Naive thymus-derived CD4-positive, alpha-beta T cell (primary cell): ENCODE measurements at regions of chr17 and their contacts with region 1.

Region 1: GRCh38 chr17:81101614-81102306 is 63.5 kb upstream of the PVALEF start:
- DNase-seq: peak; percentile 81 to 93 (median 90)
- ATAC-seq: peak; percentile 100
- H3K4me3 ChIP-seq: no peak overlapping the region
- H3K4me3 Mint-ChIP-seq: no peak overlapping the region
- H3K27ac ChIP-seq: no peak overlapping the region
- H3K27ac Mint-ChIP-seq: no peak overlapping the region
- H3K4me1 ChIP-seq: peaks cover 10 to 20% of the 10 kb centered on the region in 2 donors
- H3K4me1 Mint-ChIP-seq: peaks cover 0 to 3% (median under 1%) of the 10 kb centered on the region in 7 donors
- H3K27me3 ChIP-seq: no peaks in the 10 kb centered on the region
- H3K27me3 Mint-ChIP-seq: no peaks in the 10 kb centered on the region

Region 2: GRCh38 chr17:80991645-80992076 is 110.1 kb before region 1 on chr17 and contains the start of gene CHMP6:
- CTCF ChIA-PET with region 1: interaction called, 11 read pairs
- POLR2A ChIA-PET with region 1: no interaction called
- intact Hi-C with region 1: loop called in 1 of 2 experiments (anchors 1 kb)
- DNase-seq: peak; percentile 60 to 84 (median 78)
- ATAC-seq: peak; percentile 89
- H3K4me3 ChIP-seq: peak within 1 kb of the TSS; percentile 94
- H3K4me3 Mint-ChIP-seq: peak within 1 kb of the TSS; percentile 71 to 88 (median 83)
- H3K27ac ChIP-seq: peak within 1 kb of the TSS; percentile 96
- H3K27ac Mint-ChIP-seq: peak within 1 kb of the TSS; percentile 78 to 90 (median 84)
- H3K4me1 ChIP-seq: peaks cover 14 to 25% of the 10 kb centered on the region in 2 donors
- H3K4me1 Mint-ChIP-seq: peaks cover 7 to 38% (median 21%) of the 10 kb centered on the region in 7 donors
- H3K27me3 ChIP-seq: no peaks in the 10 kb centered on the region
- H3K27me3 Mint-ChIP-seq: peaks cover 0 to 11% (median 0%) of the 10 kb centered on the region in 5 donors
- total RNA-seq, gene CHMP6: 26.4 to 49.9 (median 41.7) TPM

Region 3: GRCh38 chr17:81018044-81018802 is 83.5 kb before region 1 on chr17:
- CTCF ChIA-PET with region 1: interaction called, 16 read pairs
- POLR2A ChIA-PET with region 1: no interaction called
- intact Hi-C with region 1: loop called in 1 of 2 experiments (anchors 1 kb)
- DNase-seq: peak in 7 of 9 donors; percentile 47 to 62 (median 55)
- ATAC-seq: peak; percentile 84
- H3K4me3 ChIP-seq: peak overlapping the region; percentile 74
- H3K4me3 Mint-ChIP-seq: peak overlapping the region; percentile 80 to 91 (median 88)
- H3K27ac ChIP-seq: peak overlapping the region; percentile 80
- H3K27ac Mint-ChIP-seq: peak overlapping the region; percentile 92 to 99 (median 95)
- H3K4me1 ChIP-seq: peaks cover 10 to 16% of the 10 kb centered on the region in 2 donors
- H3K4me1 Mint-ChIP-seq: peaks cover 20 to 49% (median 42%) of the 10 kb centered on the region in 7 donors
- H3K27me3 ChIP-seq: no peaks in the 10 kb centered on the region
- H3K27me3 Mint-ChIP-seq: no peaks in the 10 kb centered on the region

Region 4: GRCh38 chr17:81034779-81035388 is 66.9 kb before region 1 on chr17 and contains the start of gene BAIAP2:
- CTCF ChIA-PET with region 1: no interaction called
- POLR2A ChIA-PET with region 1: no interaction called
- intact Hi-C with region 1: loop called in 1 of 2 experiments (anchors 1 kb)
- DNase-seq: peak; percentile 88 to 95 (median 94)
- ATAC-seq: peak; percentile 94
- H3K4me3 ChIP-seq: peak within 1 kb of the TSS; percentile 53
- H3K4me3 Mint-ChIP-seq: peak within 1 kb of the TSS; percentile 87 to 96 (median 92)
- H3K27ac ChIP-seq: peak within 1 kb of the TSS; percentile 67
- H3K27ac Mint-ChIP-seq: peak within 1 kb of the TSS in 8 of 9 donors; percentile 49 to 93 (median 87)
- H3K4me1 ChIP-seq: peaks cover 0 to 9% of the 10 kb centered on the region in 2 donors
- H3K4me1 Mint-ChIP-seq: peaks cover 5 to 27% (median 19%) of the 10 kb centered on the region in 7 donors
- H3K27me3 ChIP-seq: no peaks in the 10 kb centered on the region
- H3K27me3 Mint-ChIP-seq: peaks cover 0 to 50% (median 0%) of the 10 kb centered on the region in 5 donors
- total RNA-seq, gene BAIAP2: 7.3 to 13.7 (median 12.3) TPM

Region 5: DNA sequence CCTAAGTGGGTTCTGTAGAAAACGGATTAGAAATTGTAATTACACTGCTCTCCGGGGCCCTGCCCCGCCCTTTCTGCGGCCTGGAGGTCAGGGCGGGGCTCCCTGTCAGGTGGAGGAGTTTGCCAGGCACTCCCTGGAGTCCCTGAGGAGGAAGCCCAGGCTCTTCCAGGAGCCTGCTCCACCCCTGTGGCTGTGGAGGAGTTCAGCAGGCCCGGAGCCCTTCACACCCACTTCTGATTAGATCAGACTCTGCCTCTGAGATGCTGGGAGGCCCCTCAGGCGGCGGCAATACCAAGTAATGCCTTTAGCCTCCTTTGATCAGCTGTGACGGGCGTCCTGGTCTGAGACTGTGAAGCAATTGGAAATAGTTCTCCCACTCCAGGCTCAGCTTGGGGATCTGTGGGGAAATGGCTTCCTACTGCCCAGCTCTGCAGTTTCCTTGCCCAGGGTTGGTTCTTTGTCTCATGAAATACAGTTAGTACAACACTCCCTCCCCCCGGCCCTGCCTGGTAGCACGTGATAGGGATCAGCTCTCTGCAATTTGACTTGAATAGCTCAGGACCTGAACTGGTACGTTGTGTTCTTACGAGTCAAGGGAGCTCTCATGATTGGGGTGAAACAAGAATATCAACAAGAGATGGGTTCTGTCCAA is 44.6 kb before region 1 on chr17:
- CTCF ChIA-PET with region 1: no interaction called
- POLR2A ChIA-PET with region 1: no interaction called
- intact Hi-C with region 1: no loop called
- DNase-seq: no peak
- ATAC-seq: no peak
- H3K4me3 ChIP-seq: no peak overlapping the region
- H3K4me3 Mint-ChIP-seq: no peak overlapping the region
- H3K27ac ChIP-seq: no peak overlapping the region
- H3K27ac Mint-ChIP-seq: peak overlapping the region in 2 of 9 donors; percentile 7 to 37
- H3K4me1 ChIP-seq: no peaks in the 10 kb centered on the region
- H3K4me1 Mint-ChIP-seq: peaks cover 0 to 5% (median 2%) of the 10 kb centered on the region in 7 donors
- H3K27me3 ChIP-seq: no peaks in the 10 kb centered on the region
- H3K27me3 Mint-ChIP-seq: no peaks in the 10 kb centered on the region

Region 6: DNA sequence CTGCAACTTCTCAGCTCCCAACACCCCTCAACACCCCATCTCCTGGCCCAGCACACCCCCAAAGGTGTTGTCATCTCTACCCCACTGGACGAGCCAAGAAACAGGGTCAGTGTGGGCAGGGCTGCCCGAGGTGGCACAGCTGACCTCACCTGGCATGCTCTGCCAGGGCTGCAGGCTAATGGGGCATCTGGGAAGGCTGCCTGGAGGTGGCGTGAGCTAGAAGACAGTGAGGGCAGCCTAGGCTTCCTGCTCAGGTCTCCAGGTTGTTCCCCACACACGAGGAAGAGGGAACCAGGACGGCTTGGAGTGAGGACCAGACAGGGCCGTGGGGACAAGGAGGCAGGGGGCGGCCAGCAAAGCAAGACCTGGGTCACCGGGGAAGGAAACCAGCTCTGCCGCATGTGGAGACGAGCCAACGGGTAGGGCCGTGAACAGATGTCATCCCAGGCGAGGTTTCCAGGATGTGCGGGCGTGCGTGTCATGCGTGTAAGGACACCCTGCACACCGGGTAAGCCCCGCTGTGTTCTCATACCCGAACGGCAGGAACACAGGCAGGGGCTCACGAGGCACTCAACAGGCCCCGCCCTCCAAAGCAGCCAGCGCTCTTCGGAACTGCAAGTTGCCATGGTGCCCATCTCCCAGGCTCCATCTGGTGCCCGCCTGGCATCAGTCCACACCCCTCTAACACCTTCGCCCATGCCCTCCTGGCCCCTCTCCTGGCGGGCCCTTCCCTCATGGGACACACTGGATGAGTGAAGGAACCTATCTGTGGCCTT is 33.9 kb after region 1 on chr17:
- CTCF ChIA-PET with region 1: no interaction called
- POLR2A ChIA-PET with region 1: no interaction called
- intact Hi-C with region 1: no loop called
- DNase-seq: no peak
- ATAC-seq: no peak
- H3K4me3 ChIP-seq: no peak overlapping the region
- H3K4me3 Mint-ChIP-seq: peak overlapping the region in 1 of 10 donors; percentile 8
- H3K27ac ChIP-seq: no peak overlapping the region
- H3K27ac Mint-ChIP-seq: no peak overlapping the region
- H3K4me1 ChIP-seq: no peaks in the 10 kb centered on the region
- H3K4me1 Mint-ChIP-seq: no peaks in the 10 kb centered on the region
- H3K27me3 ChIP-seq: no peaks in the 10 kb centered on the region
- H3K27me3 Mint-ChIP-seq: no peaks in the 10 kb centered on the region

Region 7: GRCh38 chr17:81238817-81239600 is 137.2 kb after region 1 on chr17 and contains the starts of genes NDUFAF8 and TEPSIN:
- CTCF ChIA-PET with region 1: no interaction called
- POLR2A ChIA-PET with region 1: no interaction called
- intact Hi-C with region 1: loop called in 1 of 2 experiments (anchors 1 kb)
- DNase-seq: peak; percentile 87 to 98 (median 97)
- ATAC-seq: peak; percentile 98
- H3K4me3 ChIP-seq: peak within 1 kb of the TSS; percentile 71
- H3K4me3 Mint-ChIP-seq: peak within 1 kb of the TSS; percentile 92 to 97 (median 95)
- H3K27ac ChIP-seq: peak within 1 kb of the TSS; percentile 79
- H3K27ac Mint-ChIP-seq: peak within 1 kb of the TSS; percentile 86 to 95 (median 90)
- H3K4me1 ChIP-seq: peaks cover 22 to 24% of the 10 kb centered on the region in 2 donors
- H3K4me1 Mint-ChIP-seq: peaks cover 17 to 51% (median 38%) of the 10 kb centered on the region in 7 donors
- H3K27me3 ChIP-seq: no peaks in the 10 kb centered on the region
- H3K27me3 Mint-ChIP-seq: no peaks in the 10 kb centered on the region
- total RNA-seq, gene NDUFAF8: 34.2 to 45.6 (median 43.5) TPM
- total RNA-seq, gene TEPSIN: 52.6 to 115 (median 90.0) TPM